ENCODE measurements at regions of chr2 and their contacts with region 1.

Region 1: GRCh38 chr2:156341452-156342253 is 9.1 kb upstream of the NR4A2 start:
- DNase-seq: peak; percentile 97
- ATAC-seq: peak; percentile 94

Region 2: GRCh38 chr2:156400706-156401678 is 59.3 kb after region 1 on chr2:
- intact Hi-C with region 1: loop called (anchors 5 kb)
- DNase-seq: peak; percentile 86
- ATAC-seq: peak; percentile 93

Measured in sciatic nerve (tissue), 2 donors.